HepG2 (cell line): ENCODE measurements at regions of chr15 and their contacts with region 1.

Region 1: GRCh38 chr15:77118882-77119321 is 48.0 kb upstream of the TSPAN3 start:
- DNase-seq: peak; percentile 59
- ATAC-seq: peak; percentile 62; the same call in 2 of the 3 replicates
- H3K4me3 ChIP-seq: no peak overlapping the region
- H3K27ac ChIP-seq: no peak overlapping the region
- H3K4me1 ChIP-seq: 0 out of 2 replicates have a peak, but pooled peaks cover 5% of the 10 kb centered on the region
- H3K27me3 ChIP-seq: no peaks in the 10 kb centered on the region
- CTCF ChIP-seq: peak; percentile 75
- EP300 ChIP-seq: no peak
- POLR2A ChIP-seq: no peak
- RAD21 ChIP-seq: peak; percentile 59; the same call in 1 of the 2 replicates

Region 2: DNA sequence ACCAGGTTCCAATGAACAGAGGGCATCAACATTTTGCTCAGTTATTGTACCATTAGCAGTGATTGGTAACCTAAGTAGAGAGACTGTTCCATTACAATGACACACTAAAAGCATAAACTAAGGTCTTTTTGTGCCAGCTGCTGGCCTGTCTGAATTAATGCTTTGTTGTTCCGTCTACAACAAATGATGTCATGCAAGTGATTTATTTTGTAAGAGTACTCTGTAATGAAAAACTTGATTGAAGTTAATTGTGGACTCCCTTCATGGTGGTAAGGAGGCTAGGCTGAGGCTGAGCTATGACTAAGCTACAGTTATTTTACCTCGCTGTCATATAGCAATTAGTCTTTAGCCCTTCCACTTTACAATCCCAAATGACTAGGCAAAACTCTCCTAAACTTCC is 164.2 kb before region 1 on chr15:
- CTCF ChIA-PET with region 1: no interaction called
- POLR2A ChIA-PET with region 1: no interaction called
- in situ Hi-C with region 1: no loop called
- intact Hi-C with region 1: no loop called
- DNase-seq: no peak
- ATAC-seq: no peak
- H3K4me3 ChIP-seq: no peak overlapping the region
- H3K27ac ChIP-seq: no peak overlapping the region
- H3K4me1 ChIP-seq: no peaks in the 10 kb centered on the region
- H3K27me3 ChIP-seq: no peaks in the 10 kb centered on the region; a peak in 1 of 5 replicates
- CTCF ChIP-seq: no peak
- EP300 ChIP-seq: no peak
- POLR2A ChIP-seq: no peak
- RAD21 ChIP-seq: no peak

Region 3: GRCh38 chr15:77168616-77169015 is 49.7 kb after region 1 on chr15:
- CTCF ChIA-PET with region 1: no interaction called
- POLR2A ChIA-PET with region 1: no interaction called
- in situ Hi-C with region 1: loop called (anchors 5 kb)
- intact Hi-C with region 1: no loop called
- DNase-seq: no peak
- ATAC-seq: no peak
- H3K4me3 ChIP-seq: no peak overlapping the region
- H3K27ac ChIP-seq: no peak overlapping the region
- H3K4me1 ChIP-seq: peaks cover 38% of the 10 kb centered on the region
- H3K27me3 ChIP-seq: no peaks in the 10 kb centered on the region
- CTCF ChIP-seq: no peak
- EP300 ChIP-seq: no peak
- POLR2A ChIP-seq: no peak
- RAD21 ChIP-seq: no peak

Region 4: DNA sequence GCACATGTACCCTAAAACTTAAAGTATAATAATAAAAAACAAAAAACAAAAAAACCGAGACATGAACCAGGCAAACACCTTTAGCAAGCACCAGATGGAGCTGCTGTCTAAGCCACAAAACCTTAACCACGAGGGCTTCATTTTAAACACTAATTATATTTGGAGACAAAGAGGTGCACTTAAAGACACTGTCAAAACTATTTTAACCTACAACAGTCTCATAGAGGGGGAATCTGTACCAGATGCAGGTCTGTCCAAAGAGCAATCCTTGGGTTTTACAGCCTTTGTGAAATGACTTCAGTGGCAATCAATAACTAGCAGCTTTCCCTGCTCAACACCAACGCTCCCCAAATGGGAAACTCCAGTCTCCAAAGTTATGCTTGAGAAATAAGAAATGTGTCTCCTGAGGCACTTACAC is 67.7 kb after region 1 on chr15:
- CTCF ChIA-PET with region 1: interaction called, 4 read pairs
- POLR2A ChIA-PET with region 1: no interaction called
- in situ Hi-C with region 1: no loop called
- intact Hi-C with region 1: loop called (anchors 2 kb)
- DNase-seq: no peak
- ATAC-seq: peak; percentile 60; the same call in 2 of the 3 replicates
- H3K4me3 ChIP-seq: no peak overlapping the region
- H3K27ac ChIP-seq: no peak overlapping the region
- H3K4me1 ChIP-seq: peaks cover 30% of the 10 kb centered on the region
- H3K27me3 ChIP-seq: no peaks in the 10 kb centered on the region
- CTCF ChIP-seq: peak; percentile 52
- EP300 ChIP-seq: no peak
- POLR2A ChIP-seq: no peak
- RAD21 ChIP-seq: peak; percentile 49; the same call in 1 of the 2 replicates